Ascending aorta (tissue), 2 donors: ENCODE measurements at regions of chr2 and their contacts with region 1.

Region 1: DNA sequence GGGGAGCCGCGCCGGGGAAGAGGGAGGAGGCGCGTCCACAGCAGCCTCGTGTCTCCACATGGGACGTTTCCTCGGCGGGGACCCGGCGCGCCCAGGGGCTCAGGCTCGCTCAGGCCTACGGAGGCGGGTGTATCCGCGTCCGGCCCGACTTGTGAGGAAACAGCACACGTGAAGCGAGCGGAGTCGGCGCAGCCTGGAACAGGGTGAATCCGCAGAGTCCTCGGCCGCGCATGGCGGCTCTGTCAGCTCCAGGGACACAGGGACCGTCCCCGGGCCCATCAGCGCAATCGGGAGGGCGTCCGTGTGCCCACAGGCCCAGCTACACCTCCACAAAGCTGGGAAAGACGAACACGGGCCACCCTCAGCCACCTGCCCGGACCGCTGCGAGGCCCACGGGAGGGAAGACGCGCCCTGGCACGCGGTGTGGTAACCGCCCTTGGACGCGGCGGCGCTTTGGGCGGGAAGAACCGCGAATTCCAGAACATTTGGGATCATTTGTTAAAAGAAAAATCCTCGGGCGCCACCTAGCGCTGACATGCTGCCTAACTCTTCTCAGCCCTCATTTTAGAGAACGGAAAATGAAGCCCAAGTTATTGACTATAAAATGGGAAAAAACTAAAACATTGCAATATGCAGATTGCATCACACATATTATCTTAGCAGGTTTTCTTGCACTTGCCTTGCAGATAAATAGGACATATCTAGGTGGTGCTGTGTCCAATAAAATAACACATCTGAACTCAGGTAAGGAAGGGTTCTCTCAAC is 40.4 kb downstream of the TMEM18 start:
- DNase-seq: peak in 1 of 2 donors; percentile 78
- H3K4me3 ChIP-seq: peak overlapping the region; percentile 45 to 64
- H3K27ac ChIP-seq: no peak overlapping the region
- H3K4me1 ChIP-seq: peaks cover 0 to 6% of the 10 kb centered on the region in 2 donors
- H3K27me3 ChIP-seq: no peaks in the 10 kb centered on the region
- CTCF ChIP-seq: peak; percentile 65 to 87 (median 69)

Region 2: GRCh38 chr2:175880-176800 is 460.7 kb before region 1 on chr2:
- intact Hi-C with region 1: loop called (anchors 1 kb)
- DNase-seq: no peak
- H3K4me3 ChIP-seq: no peak overlapping the region
- H3K27ac ChIP-seq: no peak overlapping the region
- H3K4me1 ChIP-seq: peaks cover 0 to 4% of the 10 kb centered on the region in 2 donors
- H3K27me3 ChIP-seq: no peaks in the 10 kb centered on the region
- CTCF ChIP-seq: no peak

Region 3: DNA sequence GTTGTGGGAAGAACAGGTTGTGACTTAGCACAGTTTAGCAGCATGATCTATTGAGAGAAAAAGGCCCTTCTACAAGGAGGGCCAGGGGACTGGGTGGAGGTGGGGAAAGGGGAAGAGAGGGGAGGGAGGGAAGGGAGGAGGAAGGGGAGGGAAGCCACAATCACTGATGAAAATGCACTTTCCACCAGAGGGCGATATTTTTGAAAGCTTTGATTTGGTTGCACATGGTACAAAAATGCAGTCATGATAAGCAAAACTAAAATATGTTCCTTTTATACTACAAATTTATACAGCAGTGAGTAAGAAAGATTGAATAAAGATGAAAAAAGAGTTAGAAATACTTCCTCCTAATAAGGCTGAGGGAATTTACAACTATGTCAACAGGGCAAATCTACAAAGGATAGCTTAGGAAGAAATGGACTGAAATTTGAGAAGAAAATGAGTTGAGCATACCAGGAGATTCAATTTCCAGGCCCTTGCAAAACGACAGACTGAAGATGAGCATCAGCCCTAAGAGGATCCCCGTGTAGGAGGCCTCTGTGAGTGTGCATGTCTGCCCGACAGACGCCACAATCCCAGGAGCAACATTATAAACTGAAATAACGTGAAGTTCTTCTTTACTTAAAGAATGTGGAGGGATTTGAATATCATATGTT is 390.2 kb before region 1 on chr2:
- intact Hi-C with region 1: loop called (anchors 10 kb)
- DNase-seq: no peak
- H3K4me3 ChIP-seq: no peak overlapping the region
- H3K27ac ChIP-seq: no peak overlapping the region
- H3K4me1 ChIP-seq: no peaks in the 10 kb centered on the region
- H3K27me3 ChIP-seq: no peaks in the 10 kb centered on the region
- CTCF ChIP-seq: peak; percentile 14 to 55 (median 41)